ENCODE measurements at regions of chr5 and their contacts with region 1.

Region 1: DNA sequence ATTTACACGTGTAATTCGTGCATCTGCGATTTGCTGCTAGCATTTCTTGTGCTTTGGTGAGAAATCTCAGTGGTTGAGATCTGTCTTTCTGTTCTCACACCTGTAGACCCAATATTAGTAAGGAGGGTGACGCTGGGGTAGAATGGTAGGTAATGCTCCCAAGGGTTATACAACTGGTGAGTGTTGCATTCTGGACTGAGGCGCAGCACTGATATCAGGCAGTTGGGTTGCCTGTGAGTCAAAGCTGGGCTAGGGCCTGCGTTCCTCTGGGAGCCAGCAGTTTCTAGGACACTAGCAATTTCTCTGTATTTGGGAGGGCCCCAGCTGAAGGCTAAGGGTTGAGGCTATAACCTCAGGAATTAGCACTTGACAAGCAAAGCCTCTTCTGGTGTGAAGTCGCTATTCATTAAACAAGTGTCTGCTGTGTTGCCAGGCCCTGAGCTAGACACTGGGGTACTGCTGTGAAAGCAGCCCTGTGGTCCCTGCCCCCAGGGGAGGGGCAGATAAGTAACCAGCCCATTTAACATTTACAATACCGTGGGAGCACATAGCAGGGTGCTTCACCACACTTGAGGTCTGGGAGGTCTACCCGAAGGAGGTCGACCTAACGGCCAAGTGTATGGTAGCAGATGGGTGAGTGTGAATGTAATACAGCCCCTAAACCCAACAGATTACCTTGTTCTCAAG is 28.7 kb downstream of the LARP1 start:
- DNase-seq: no peak
- H3K4me3 ChIP-seq: no peak overlapping the region
- H3K27ac ChIP-seq: no peak overlapping the region
- H3K4me1 ChIP-seq: peaks cover 16 to 39% (median 32%) of the 10 kb centered on the region in 4 experiments
- H3K27me3 ChIP-seq: no peaks in the 10 kb centered on the region
- CTCF ChIP-seq: no peak
- EP300 ChIP-seq: no peak
- POLR2A ChIP-seq: no peak
- RAD21 ChIP-seq: no peak; a peak in 1 of 4 replicates

Region 2: GRCh38 chr5:154771383-154771901 is 12.5 kb before region 1 on chr5:
- CTCF ChIA-PET with region 1: interaction called, 27 read pairs
- POLR2A ChIA-PET with region 1: interaction called, 307 read pairs
- DNase-seq: no peak
- H3K4me3 ChIP-seq: no peak overlapping the region
- H3K27ac ChIP-seq: no peak overlapping the region
- H3K4me1 ChIP-seq: peaks cover 10 to 57% (median 46%) of the 10 kb centered on the region in 4 experiments
- H3K27me3 ChIP-seq: no peaks in the 10 kb centered on the region
- CTCF ChIP-seq: peak; percentile 10 to 22 (median 22); a peak in 3 of 4 replicates
- EP300 ChIP-seq: no peak
- POLR2A ChIP-seq: no peak
- RAD21 ChIP-seq: peak in 1 of 2 experiments; percentile 31; a peak in 1 of 4 replicates

Region 3: DNA sequence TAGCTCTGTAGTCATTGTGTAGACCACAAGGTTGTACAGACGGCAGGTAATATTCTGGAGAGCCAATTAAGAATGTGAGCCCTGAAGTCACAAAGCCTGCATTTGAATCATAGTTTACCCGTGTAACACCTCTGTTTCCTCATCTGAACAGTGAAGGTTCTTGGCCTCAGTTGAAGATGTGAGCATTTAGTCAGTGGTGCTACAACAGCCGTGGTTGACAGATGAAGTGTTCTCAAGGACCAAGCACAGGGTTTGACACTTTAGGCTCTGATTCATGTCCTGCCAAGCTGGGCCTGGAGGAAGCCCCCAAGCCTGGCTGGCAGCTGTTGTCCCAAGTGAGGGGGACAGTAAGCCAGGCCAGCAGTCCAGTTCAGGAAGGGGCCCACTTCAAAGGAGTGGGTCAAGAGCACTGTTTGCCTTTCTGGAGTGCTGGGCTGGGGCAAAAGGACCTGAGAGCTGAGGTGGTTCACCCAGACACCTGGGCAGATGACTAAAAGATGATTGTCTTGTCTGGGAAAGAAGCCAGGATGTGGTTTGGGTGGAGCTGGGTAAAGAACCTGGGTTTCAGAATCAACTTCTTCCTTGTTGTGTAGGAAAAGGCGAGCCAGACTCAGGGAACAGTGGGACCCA is 45.8 kb after region 1 on chr5:
- CTCF ChIA-PET with region 1: no interaction called
- POLR2A ChIA-PET with region 1: no interaction called
- DNase-seq: no peak
- H3K4me3 ChIP-seq: no peak overlapping the region
- H3K27ac ChIP-seq: no peak overlapping the region
- H3K4me1 ChIP-seq: peaks cover 0 to 2% (median 0%) of the 10 kb centered on the region in 4 experiments; a peak in 2 of 7 replicates
- H3K27me3 ChIP-seq: no peaks in the 10 kb centered on the region
- CTCF ChIP-seq: no peak
- EP300 ChIP-seq: no peak
- POLR2A ChIP-seq: no peak
- RAD21 ChIP-seq: no peak

Measured in H1 (cell line).